ENCODE measurements at regions of chr3 and their contacts with region 1.

Region 1: DNA sequence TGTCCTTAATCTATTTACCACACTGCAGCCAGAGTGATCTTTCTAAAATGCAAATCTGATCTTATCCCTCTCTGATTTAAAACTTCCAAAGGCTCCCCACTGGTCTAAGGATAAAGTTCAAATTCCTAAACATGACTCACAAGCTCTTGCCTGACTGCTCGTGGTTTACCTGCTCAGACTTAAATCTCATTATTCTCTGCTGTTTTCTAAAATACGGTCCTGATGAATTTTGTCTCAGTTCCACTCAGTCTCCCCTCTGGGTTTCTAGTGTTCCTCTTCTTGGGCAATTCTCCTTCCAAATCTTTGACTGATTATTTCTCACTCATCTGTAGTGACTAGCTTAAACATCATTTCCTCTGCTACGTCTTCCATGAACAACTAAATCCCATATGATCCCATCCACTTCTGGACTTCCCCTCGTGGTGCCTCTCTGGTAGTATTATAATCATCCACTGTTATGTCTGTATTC is 108.3 kb downstream of the P3H2 start:
- DNase-seq: peak; percentile 20 to 91
- H3K4me3 ChIP-seq: peak overlapping the region; percentile 25; the same call in 1 of the 2 replicates
- H3K27ac ChIP-seq: peak overlapping the region; percentile 74
- H3K4me1 ChIP-seq: peaks cover 45% of the 10 kb centered on the region
- H3K27me3 ChIP-seq: no peaks in the 10 kb centered on the region
- CTCF ChIP-seq: no peak

Region 2: DNA sequence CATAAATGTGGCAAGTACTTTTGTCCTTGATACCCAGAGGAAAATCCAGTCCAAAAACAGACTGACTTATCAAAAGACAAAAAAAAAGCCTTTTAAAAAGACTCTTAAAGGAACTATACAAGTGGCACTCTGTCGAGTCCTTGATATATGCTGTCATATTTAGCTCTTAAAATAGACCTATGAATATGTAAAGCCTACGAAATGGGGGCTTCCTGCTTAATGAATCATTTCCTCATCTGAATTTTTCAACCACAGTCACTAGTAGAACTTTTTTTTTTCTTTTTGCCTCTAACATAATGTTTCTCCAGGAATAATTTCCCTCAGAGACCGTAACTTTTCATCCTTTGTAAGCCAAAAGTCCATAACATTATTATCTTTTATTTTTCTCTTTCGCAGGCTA is 12.6 kb after region 1 on chr3:
- CTCF ChIA-PET with region 1: no interaction called
- POLR2A ChIA-PET with region 1: no interaction called
- intact Hi-C with region 1: loop called (anchors 2 kb)
- DNase-seq: no peak
- H3K4me3 ChIP-seq: no peak overlapping the region
- H3K27ac ChIP-seq: no peak overlapping the region
- H3K4me1 ChIP-seq: no peaks in the 10 kb centered on the region
- H3K27me3 ChIP-seq: no peaks in the 10 kb centered on the region
- CTCF ChIP-seq: no peak

Region 3: DNA sequence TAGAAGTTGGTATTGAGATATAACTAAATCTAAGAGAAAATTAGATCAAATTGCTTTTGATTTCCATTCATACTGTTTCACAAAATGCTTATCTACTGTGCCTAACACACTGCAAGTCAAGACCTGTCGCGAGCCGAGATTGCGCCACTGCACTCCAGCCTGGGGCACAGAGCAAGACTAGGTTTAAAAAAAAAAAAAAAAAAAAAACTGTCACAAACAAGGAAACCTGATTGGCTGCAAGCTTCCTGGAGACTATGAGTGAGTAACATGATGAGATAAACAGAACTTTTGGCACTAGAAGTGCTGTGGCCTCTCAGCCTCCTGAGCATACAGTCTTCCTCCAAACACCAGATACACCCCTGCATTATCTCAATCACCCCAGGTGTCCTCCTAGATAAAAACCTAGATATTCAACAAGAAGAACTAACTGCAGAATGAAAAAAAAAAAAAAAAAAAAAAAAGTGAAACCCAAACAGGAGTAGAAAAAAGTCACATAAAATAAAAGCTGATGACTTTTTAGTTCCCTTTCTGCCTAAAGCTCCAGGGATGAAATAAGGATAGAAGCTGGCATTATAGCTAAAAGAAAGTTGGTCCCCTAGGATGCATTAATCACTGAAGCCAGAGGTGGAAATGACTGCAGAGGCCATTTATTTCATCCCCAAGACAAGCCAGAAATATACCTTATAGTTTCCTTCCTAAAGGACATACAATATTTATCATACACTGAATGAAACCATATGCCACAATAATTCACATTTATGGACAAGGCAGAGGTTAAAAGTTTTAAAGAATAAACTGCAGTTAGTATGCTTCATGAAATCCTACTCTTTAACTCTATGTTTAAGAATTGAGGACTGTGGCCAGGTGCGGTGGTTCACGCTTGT is 25.9 kb after region 1 on chr3:
- CTCF ChIA-PET with region 1: interaction called, 4 read pairs
- POLR2A ChIA-PET with region 1: interaction called, 17 read pairs
- intact Hi-C with region 1: loop called (anchors 2 kb)
- DNase-seq: peak in 1 of 2 experiments; percentile 82
- H3K4me3 ChIP-seq: no peak overlapping the region
- H3K27ac ChIP-seq: no peak overlapping the region
- H3K4me1 ChIP-seq: no peaks in the 10 kb centered on the region
- H3K27me3 ChIP-seq: no peaks in the 10 kb centered on the region
- CTCF ChIP-seq: no peak